ENCODE measurements at regions of chr12 and their contacts with region 1.

Region 1: DNA sequence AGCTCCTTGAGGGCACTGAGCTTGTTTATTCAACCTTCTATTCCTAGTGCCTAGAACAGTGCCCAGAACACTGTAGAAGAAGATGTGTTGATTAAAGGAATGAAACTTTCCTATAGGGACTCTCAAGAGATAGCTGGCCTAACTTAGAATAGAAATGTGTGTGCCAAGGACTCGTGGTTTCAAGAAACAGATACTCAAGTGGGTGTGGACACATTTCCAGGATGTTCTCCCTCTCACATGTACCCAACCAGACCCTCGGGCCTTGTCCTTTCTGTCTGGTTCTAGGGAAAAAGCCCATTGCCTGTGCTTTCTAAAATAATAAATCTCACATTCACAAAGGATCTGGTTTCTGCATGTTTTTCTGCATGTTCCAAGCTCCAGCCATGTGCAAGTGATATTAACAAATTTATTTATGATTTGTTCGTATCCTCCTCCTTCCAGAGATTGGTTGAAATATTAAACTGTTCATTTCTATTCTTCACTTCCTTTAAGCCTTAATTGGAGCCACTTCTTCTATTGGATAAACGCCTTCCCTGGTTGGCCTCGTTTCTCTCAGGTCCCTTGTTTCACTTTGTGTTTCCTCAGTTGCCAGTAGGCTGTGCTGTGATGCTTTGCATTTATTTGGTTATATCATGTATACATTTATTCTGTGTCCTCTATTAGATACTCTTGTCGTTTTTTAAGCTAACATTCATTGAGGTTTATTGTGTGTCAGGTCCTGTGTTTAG is 89.8 kb downstream of the CRADD start:
- DNase-seq: peak; percentile 44 to 59 (median 56)
- H3K4me3 ChIP-seq: peak overlapping the region in 1 of 3 experiments; percentile 16
- H3K4me3 Mint-ChIP-seq: peak overlapping the region in 1 of 2 donors; percentile 47
- H3K27ac ChIP-seq: no peak overlapping the region
- H3K27ac Mint-ChIP-seq: peak overlapping the region in 2 of 7 donors; percentile 55 to 70
- H3K4me1 ChIP-seq: peaks cover 9 to 20% of the 10 kb centered on the region in 2 donors
- H3K4me1 Mint-ChIP-seq: peaks cover 20% of the 10 kb centered on the region
- H3K27me3 ChIP-seq: no peaks in the 10 kb centered on the region
- H3K27me3 Mint-ChIP-seq: peaks cover 0 to 1% (median 0%) of the 10 kb centered on the region in 3 donors
- CTCF ChIP-seq: peak; percentile 75

Region 2: GRCh38 chr12:93722835-93723538 is 44.0 kb before region 1 on chr12:
- intact Hi-C with region 1: no loop called
- DNase-seq: no peak
- H3K4me3 ChIP-seq: no peak overlapping the region
- H3K4me3 Mint-ChIP-seq: no peak overlapping the region
- H3K27ac ChIP-seq: no peak overlapping the region
- H3K27ac Mint-ChIP-seq: peak overlapping the region in 1 of 7 donors; percentile 41
- H3K4me1 ChIP-seq: no peaks in the 10 kb centered on the region
- H3K4me1 Mint-ChIP-seq: peaks cover 9% of the 10 kb centered on the region
- H3K27me3 ChIP-seq: no peaks in the 10 kb centered on the region
- H3K27me3 Mint-ChIP-seq: peaks cover 0 to 2% (median 0%) of the 10 kb centered on the region in 3 donors
- CTCF ChIP-seq: no peak

Region 3: DNA sequence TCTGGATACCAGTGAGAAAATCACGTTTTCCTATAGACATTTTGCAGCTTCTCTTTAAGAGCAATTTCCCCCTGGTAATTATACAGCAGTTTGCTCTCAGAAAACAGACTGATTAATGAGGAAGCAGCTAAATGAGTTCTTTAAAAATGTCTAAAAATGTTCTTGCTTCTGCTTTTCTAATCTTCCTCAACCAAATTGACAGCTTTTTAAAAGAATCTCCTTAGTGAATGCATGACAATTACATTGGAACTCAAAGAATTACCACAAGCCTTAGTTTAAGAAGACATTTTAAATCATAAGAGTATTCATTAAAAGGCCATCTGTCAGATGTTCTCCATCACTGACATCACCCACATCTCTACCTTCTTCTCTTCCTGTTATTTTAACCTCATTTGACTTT is 245.6 kb after region 1 on chr12:
- intact Hi-C with region 1: loop called in 1 of 2 experiments (anchors 10 kb)
- DNase-seq: peak; percentile 34 to 63 (median 46)
- H3K4me3 ChIP-seq: peak overlapping the region in 1 of 3 experiments; percentile 41
- H3K4me3 Mint-ChIP-seq: no peak overlapping the region
- H3K27ac ChIP-seq: peak overlapping the region; percentile 51 to 87
- H3K27ac Mint-ChIP-seq: peak overlapping the region; percentile 73 to 91 (median 90)
- H3K4me1 ChIP-seq: peaks cover 24 to 35% of the 10 kb centered on the region in 2 donors
- H3K4me1 Mint-ChIP-seq: peaks cover 30% of the 10 kb centered on the region
- H3K27me3 ChIP-seq: no peaks in the 10 kb centered on the region
- H3K27me3 Mint-ChIP-seq: peaks cover 0 to 5% (median 0%) of the 10 kb centered on the region in 3 donors
- CTCF ChIP-seq: no peak

Region 4: GRCh38 chr12:94101738-94102660 is 335.0 kb after region 1 on chr12:
- intact Hi-C with region 1: loop called (anchors 2 to 10 kb)
- DNase-seq: peak; percentile 76 to 88 (median 78)
- H3K4me3 ChIP-seq: peak overlapping the region; percentile 14 to 84 (median 54)
- H3K4me3 Mint-ChIP-seq: peak overlapping the region; percentile 76 to 86
- H3K27ac ChIP-seq: no peak overlapping the region
- H3K27ac Mint-ChIP-seq: peak overlapping the region in 3 of 7 donors; percentile 26 to 66 (median 44)
- H3K4me1 ChIP-seq: peaks cover 16 to 18% of the 10 kb centered on the region in 2 donors
- H3K4me1 Mint-ChIP-seq: peaks cover 20% of the 10 kb centered on the region
- H3K27me3 ChIP-seq: peaks cover 14 to 34% of the 10 kb centered on the region in 2 donors
- H3K27me3 Mint-ChIP-seq: peaks cover 26 to 44% (median 32%) of the 10 kb centered on the region in 3 donors
- CTCF ChIP-seq: peak; percentile 76

Measured in CD14-positive monocyte (primary cell).